GM10248 (cell line): ENCODE measurements at regions of chr17 and their contacts with region 1.

Region 1: GRCh38 chr17:68613739-68614298 is 12.7 kb upstream of the FAM20A start:
- DNase-seq: peak; percentile 40
- CTCF ChIP-seq: peak; percentile 58

Region 2: GRCh38 chr17:68480885-68481284 is 132.9 kb before region 1 on chr17:
- CTCF ChIA-PET with region 1: no interaction called
- POLR2A ChIA-PET with region 1: no interaction called
- DNase-seq: no peak
- CTCF ChIP-seq: no peak

Region 3: DNA sequence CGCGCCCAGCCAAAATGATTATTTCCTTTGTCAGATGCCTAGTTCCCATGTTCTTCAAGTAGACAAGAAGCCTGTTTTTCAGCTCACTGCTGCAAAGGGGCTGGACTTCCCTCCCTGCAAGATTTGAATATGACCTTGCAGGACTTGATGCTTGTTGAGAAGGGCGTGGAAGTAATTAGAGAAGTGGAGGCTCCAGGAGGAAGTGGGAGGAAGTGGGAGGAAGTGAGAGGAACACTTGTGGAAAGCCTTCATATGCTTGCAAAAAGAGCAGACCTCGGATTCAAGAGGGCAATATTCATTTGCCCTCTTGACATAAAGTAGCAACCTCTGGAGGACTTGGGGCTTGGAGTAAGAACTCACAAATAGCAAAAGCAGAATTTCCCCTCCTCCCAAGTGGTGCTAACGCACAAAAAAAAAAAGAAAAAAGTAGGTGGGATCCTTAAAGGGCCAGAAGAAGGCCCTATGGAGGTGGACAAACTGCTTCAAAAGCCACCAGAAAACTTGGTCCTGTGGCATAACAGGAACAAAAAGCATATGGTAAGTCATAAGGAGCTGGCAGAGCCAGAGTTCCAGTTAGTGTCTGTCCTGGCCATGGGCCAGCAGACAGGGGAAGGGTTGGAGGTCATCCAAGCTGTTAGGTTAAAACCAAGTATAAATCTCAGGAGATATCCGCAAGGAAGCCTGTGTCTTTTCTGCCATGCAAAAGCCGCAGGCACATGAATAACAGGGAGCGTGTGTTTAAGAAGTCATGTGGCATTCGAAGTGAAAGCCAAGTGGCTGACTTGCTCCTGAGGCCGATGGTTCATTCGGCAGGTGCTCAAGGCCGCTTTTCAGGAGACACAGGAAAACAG is 122.2 kb before region 1 on chr17:
- CTCF ChIA-PET with region 1: no interaction called
- POLR2A ChIA-PET with region 1: no interaction called
- DNase-seq: no peak
- CTCF ChIP-seq: no peak

Region 4: GRCh38 chr17:68627956-68628575 is 14.2 kb after region 1 on chr17:
- CTCF ChIA-PET with region 1: interaction called, 15 read pairs
- POLR2A ChIA-PET with region 1: no interaction called
- DNase-seq: no peak
- CTCF ChIP-seq: no peak

Region 5: GRCh38 chr17:68662037-68662432 is 48.2 kb after region 1 on chr17:
- CTCF ChIA-PET with region 1: no interaction called
- POLR2A ChIA-PET with region 1: no interaction called
- DNase-seq: no peak
- CTCF ChIP-seq: no peak

Region 6: GRCh38 chr17:68892658-68893057 is 278.8 kb after region 1 on chr17:
- CTCF ChIA-PET with region 1: no interaction called
- POLR2A ChIA-PET with region 1: no interaction called
- DNase-seq: no peak
- CTCF ChIP-seq: no peak